ENCODE measurements at regions of chr6 and their contacts with region 1.

Region 1: DNA sequence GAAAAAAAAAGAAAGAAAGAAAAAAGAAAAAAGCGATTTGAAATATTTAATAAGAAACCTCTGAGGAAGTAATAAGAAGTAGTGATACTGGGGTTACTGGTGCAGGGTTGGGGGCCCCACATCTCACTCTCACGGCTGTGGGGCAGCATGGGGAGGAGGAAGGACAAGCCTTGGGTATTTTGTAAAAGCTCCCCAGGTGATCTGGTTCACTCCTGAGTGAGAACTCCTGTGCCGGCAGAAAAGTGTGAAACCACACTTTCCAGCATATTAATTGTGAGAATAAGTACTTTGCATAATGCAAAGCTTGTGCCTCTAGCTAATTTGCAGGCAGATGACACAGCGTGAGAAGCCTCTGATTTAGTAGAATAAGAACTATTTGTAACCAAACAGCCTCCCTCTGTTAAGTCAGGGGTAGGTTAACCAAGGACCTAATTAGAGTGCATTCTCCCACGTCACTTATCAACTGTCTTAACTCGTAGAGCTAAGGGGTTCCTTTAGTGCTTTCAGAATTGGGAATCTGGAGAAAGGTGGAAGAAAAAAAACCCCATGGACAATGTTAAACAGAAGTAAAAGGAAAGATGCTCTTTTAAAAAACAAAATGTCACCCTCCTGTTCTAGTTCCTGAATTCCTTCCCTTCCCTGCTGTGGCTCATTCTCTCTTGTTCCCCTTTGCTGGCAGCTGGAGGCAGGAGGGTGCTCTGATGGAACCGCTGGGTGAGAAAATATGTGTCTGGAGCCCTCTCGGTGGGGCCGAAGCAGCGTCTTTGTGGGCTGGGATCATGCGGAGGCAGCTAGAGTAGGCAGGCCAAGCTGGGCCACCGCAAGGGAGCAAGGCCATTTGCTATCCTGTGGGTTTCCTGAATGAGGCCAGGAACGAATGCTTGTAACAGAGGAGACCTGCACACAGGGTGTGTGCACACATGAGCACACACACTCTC is 108.7 kb downstream of the FYN start:
- DNase-seq: peak; percentile 84
- H3K4me3 Mint-ChIP-seq: peak overlapping the region; percentile 58
- H3K27ac Mint-ChIP-seq: peak overlapping the region; percentile 97
- H3K4me1 Mint-ChIP-seq: peaks cover 98% of the 10 kb centered on the region
- H3K27me3 Mint-ChIP-seq: no peaks in the 10 kb centered on the region

Region 2: GRCh38 chr6:110873981-110874879 is 890.3 kb before region 1 on chr6 and contains the start of gene AMD1:
- CTCF ChIA-PET with region 1: no interaction called
- intact Hi-C with region 1: loop called (anchors 10 kb)
- DNase-seq: peak; percentile 94
- H3K4me3 Mint-ChIP-seq: peak within 1 kb of the TSS; percentile 95
- H3K27ac Mint-ChIP-seq: peak within 1 kb of the TSS; percentile 95
- H3K4me1 Mint-ChIP-seq: peaks cover 29% of the 10 kb centered on the region
- H3K27me3 Mint-ChIP-seq: no peaks in the 10 kb centered on the region
- total RNA-seq, gene AMD1: 72.6 to 75.3 TPM

Region 3: DNA sequence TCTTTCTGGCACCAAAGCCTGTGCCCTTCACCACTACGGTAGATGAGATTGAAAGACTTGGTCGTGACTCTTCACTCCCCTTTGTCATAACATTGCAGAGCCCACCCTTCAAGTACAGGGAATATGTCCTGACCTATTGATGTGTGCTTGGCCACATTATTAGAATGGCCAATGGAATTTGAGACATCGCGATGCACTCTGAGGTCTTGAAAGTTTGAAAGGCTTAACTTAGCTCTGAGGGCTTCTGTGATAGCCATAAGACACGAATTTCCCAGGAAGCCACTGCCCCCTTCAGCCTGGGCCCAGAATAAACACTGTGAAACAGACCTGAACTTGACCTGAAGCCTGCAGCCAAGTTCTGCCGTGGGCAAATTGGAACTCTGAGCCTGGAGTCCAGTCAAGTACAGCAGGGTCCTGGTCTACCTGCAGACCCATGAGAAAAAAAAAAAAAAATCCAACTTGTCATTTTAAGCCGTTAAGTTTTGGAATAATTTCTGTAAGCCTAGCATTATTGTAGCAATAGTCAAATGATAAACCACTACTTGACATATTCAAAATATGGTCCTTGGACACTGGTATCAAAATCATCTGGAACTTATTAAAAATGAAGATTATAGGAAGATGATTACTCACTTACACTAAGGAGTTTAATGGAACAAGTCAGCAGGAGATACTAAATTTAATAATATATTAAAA is 121.9 kb before region 1 on chr6:
- CTCF ChIA-PET with region 1: no interaction called
- intact Hi-C with region 1: no loop called
- DNase-seq: peak; percentile 73
- H3K4me3 Mint-ChIP-seq: no peak overlapping the region
- H3K27ac Mint-ChIP-seq: no peak overlapping the region
- H3K4me1 Mint-ChIP-seq: no peaks in the 10 kb centered on the region
- H3K27me3 Mint-ChIP-seq: no peaks in the 10 kb centered on the region

Region 4: GRCh38 chr6:111777357-111777756 is 12.8 kb after region 1 on chr6:
- CTCF ChIA-PET with region 1: interaction called, 10 read pairs
- intact Hi-C with region 1: loop called (anchors 1 kb)
- DNase-seq: no peak
- H3K4me3 Mint-ChIP-seq: no peak overlapping the region
- H3K27ac Mint-ChIP-seq: peak overlapping the region; percentile 79
- H3K4me1 Mint-ChIP-seq: peaks cover 83% of the 10 kb centered on the region
- H3K27me3 Mint-ChIP-seq: no peaks in the 10 kb centered on the region

Region 5: GRCh38 chr6:111812060-111813038 is 47.8 kb after region 1 on chr6:
- CTCF ChIA-PET with region 1: interaction called, 5 read pairs
- intact Hi-C with region 1: loop called (anchors 1 kb)
- DNase-seq: no peak
- H3K4me3 Mint-ChIP-seq: no peak overlapping the region
- H3K27ac Mint-ChIP-seq: peak overlapping the region; percentile 93
- H3K4me1 Mint-ChIP-seq: peaks cover 82% of the 10 kb centered on the region
- H3K27me3 Mint-ChIP-seq: no peaks in the 10 kb centered on the region

Region 6: GRCh38 chr6:111861431-111861885 is 97.0 kb after region 1 on chr6:
- CTCF ChIA-PET with region 1: interaction called, 3 read pairs
- intact Hi-C with region 1: loop called (anchors 1 kb)
- DNase-seq: peak; percentile 55
- H3K4me3 Mint-ChIP-seq: no peak overlapping the region
- H3K27ac Mint-ChIP-seq: peak overlapping the region; percentile 72
- H3K4me1 Mint-ChIP-seq: peaks cover 99% of the 10 kb centered on the region
- H3K27me3 Mint-ChIP-seq: no peaks in the 10 kb centered on the region

Region 7: DNA sequence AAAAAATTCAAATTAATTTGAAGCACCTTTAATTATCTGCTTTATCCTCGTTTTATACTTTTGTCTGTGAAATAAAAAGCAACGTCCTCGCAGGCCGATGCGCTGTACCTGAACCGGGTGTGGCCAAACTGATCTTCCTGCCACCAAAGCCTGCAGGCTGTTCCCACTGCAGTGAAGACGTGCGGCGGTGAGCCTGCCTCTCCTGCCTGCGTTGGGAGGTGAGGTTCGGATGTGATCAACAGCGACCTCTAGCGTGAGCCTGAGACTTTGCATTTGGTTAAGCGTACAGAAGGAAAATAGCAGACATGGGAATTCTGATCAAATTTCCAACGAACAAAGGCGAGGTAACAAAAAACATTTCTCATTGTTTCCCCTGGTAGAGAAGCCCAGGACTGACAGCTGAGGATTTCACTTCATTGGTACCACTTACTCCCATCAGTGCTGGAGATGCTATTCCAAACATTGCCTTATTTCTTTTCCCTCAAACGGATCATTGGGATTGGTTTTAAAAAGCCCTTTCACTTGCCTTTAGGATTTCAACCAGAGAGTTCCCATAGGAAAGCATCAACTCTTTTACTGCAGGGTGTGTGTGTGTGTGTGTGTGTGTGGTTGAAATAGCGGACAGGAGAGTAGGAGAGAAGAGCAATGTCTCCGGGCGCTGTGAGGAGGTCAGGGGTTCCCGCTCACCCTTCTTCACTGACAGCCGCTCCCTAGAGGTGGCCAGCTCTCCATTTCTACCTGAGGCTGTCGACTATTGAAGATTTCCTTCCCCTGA is 232.8 kb after region 1 on chr6:
- CTCF ChIA-PET with region 1: interaction called, 3 read pairs
- intact Hi-C with region 1: loop called (anchors 1 kb)
- DNase-seq: peak; percentile 89
- H3K4me3 Mint-ChIP-seq: peak overlapping the region; percentile 53
- H3K27ac Mint-ChIP-seq: peak overlapping the region; percentile 65
- H3K4me1 Mint-ChIP-seq: peaks cover 47% of the 10 kb centered on the region
- H3K27me3 Mint-ChIP-seq: no peaks in the 10 kb centered on the region